ENCODE measurements at regions of chr6 and their contacts with region 1.

Region 1: DNA sequence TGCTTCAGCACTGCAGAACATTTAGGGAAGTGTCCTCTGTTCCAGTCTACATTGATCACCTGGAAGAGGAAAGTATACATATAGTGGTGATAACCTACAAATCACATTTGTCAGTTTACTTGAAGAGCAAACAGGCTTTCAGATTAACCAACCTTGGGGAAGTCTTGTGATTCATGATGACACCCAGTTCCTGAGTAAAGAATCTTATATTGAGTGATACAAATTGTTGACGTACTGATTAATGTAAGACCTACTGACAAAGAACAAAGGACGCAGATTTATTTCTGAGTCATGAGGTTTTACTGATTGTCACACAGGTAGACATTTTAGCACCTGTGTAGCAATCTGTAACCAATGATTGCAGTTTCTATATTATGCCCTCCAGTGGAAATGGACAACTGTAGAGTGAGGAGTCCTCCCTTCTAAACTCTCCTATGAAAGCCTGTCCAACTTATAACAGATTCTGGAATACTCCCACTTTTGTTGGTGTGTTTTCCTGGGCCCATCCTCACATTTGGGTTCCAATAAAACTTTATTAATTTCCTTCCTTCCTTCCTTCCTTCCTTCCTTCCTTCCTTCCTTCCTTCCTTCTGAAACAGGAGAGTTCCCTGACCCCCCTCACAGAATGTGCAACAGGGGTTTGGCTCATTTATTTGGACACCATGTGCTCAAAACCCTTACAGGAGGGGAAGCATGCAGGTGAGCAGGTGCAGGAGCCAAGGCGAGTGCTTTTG is 113.5 kb downstream of the SLC35B3 start:
- DNase-seq: peak; percentile 91
- H3K4me3 ChIP-seq: no peak overlapping the region
- H3K27ac ChIP-seq: peak overlapping the region; percentile 99
- H3K4me1 ChIP-seq: peaks cover 48% of the 10 kb centered on the region
- H3K27me3 ChIP-seq: no peaks in the 10 kb centered on the region
- CTCF ChIP-seq: 0 out of 2 replicates have a peak, but pooled peaks have one; percentile 9

Region 2: GRCh38 chr6:6834356-6835222 is 1487.2 kb before region 1 on chr6:
- CTCF ChIA-PET with region 1: no interaction called
- POLR2A ChIA-PET with region 1: no interaction called
- intact Hi-C with region 1: loop called (anchors 2 kb)
- DNase-seq: no peak
- H3K4me3 ChIP-seq: no peak overlapping the region
- H3K27ac ChIP-seq: peak overlapping the region; percentile 93
- H3K4me1 ChIP-seq: peaks cover 45% of the 10 kb centered on the region
- H3K27me3 ChIP-seq: no peaks in the 10 kb centered on the region
- CTCF ChIP-seq: no peak

Region 3: DNA sequence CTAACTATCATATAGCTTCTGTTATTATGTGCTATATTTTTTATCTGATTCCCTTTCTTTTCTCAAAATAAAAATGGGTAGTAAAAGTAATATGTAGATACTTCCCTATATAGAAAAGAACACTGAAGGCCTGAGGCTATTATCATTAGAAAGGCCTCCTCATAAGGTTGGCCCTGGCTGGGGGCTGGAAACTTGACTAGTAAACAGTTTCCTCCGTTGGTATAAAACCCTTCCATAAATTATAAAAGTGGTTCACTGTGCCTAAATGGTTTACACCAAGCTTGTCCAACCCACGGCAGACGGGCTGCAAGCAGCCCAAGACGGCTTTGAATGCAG is 279.6 kb before region 1 on chr6:
- CTCF ChIA-PET with region 1: no interaction called
- POLR2A ChIA-PET with region 1: interaction called, 17 read pairs
- intact Hi-C with region 1: no loop called
- DNase-seq: no peak
- H3K4me3 ChIP-seq: no peak overlapping the region
- H3K27ac ChIP-seq: no peak overlapping the region
- H3K4me1 ChIP-seq: no peaks in the 10 kb centered on the region
- H3K27me3 ChIP-seq: no peaks in the 10 kb centered on the region
- CTCF ChIP-seq: no peak

Region 4: GRCh38 chr6:8082954-8083858 is 238.6 kb before region 1 on chr6:
- CTCF ChIA-PET with region 1: no interaction called
- POLR2A ChIA-PET with region 1: no interaction called
- intact Hi-C with region 1: loop called (anchors 1 kb)
- DNase-seq: peak; percentile 82
- H3K4me3 ChIP-seq: no peak overlapping the region
- H3K27ac ChIP-seq: peak overlapping the region; percentile 77
- H3K4me1 ChIP-seq: peaks cover 50% of the 10 kb centered on the region
- H3K27me3 ChIP-seq: no peaks in the 10 kb centered on the region
- CTCF ChIP-seq: no peak

Region 5: GRCh38 chr6:8131256-8131897 is 190.5 kb before region 1 on chr6:
- CTCF ChIA-PET with region 1: interaction called, 3 read pairs
- POLR2A ChIA-PET with region 1: no interaction called
- intact Hi-C with region 1: loop called (anchors 1 kb)
- DNase-seq: peak; percentile 89
- H3K4me3 ChIP-seq: no peak overlapping the region
- H3K27ac ChIP-seq: peak overlapping the region; percentile 22
- H3K4me1 ChIP-seq: peaks cover 25% of the 10 kb centered on the region
- H3K27me3 ChIP-seq: no peaks in the 10 kb centered on the region
- CTCF ChIP-seq: peak; percentile 81

Region 6: GRCh38 chr6:8492536-8493133 is 170.8 kb after region 1 on chr6:
- CTCF ChIA-PET with region 1: no interaction called
- POLR2A ChIA-PET with region 1: no interaction called
- intact Hi-C with region 1: loop called (anchors 5 kb)
- DNase-seq: peak; percentile 91
- H3K4me3 ChIP-seq: no peak overlapping the region
- H3K27ac ChIP-seq: no peak overlapping the region
- H3K4me1 ChIP-seq: peaks cover 18% of the 10 kb centered on the region
- H3K27me3 ChIP-seq: no peaks in the 10 kb centered on the region
- CTCF ChIP-seq: no peak

Measured in A673 (cell line).